Heart left ventricle (tissue), 16 donors: ENCODE measurements at regions of chr17 and their contacts with region 1.

Region 1: DNA sequence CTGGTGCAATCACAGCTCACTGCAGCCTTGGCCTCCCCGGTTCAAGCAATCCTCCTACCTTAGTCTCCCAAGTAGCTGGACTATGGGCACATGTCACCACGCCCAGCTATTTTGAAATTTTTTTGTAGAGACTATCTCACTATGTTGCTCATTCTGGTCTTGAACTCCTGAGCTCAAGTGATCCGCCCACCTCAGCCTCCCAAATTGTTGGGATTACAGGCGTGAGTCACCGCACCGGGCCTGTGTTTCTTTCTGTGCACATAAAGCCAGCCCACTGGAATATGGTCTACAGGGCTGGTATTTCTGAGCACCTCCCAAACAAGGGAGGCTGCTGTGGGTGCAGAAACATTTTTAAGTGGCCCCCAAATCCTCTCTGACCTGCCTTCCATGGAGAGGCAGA is 8.4 kb downstream of the TMEM95 start:
- DNase-seq: no peak
- ATAC-seq: no peak
- H3K4me3 ChIP-seq: no peak overlapping the region
- H3K27ac ChIP-seq: no peak overlapping the region
- H3K4me1 ChIP-seq: no peaks in the 10 kb centered on the region
- H3K27me3 ChIP-seq: no peaks in the 10 kb centered on the region
- CTCF ChIP-seq: no peak
- POLR2A ChIP-seq: no peak

Region 2: GRCh38 chr17:7156342-7156940 is 206.9 kb before region 1 on chr17:
- intact Hi-C with region 1: no loop called
- DNase-seq: no peak
- ATAC-seq: no peak
- H3K4me3 ChIP-seq: no peak overlapping the region
- H3K27ac ChIP-seq: no peak overlapping the region
- H3K4me1 ChIP-seq: no peaks in the 10 kb centered on the region
- H3K27me3 ChIP-seq: peaks cover 0 to 51% (median 8%) of the 10 kb centered on the region in 9 donors
- CTCF ChIP-seq: no peak
- POLR2A ChIP-seq: no peak

Region 3: DNA sequence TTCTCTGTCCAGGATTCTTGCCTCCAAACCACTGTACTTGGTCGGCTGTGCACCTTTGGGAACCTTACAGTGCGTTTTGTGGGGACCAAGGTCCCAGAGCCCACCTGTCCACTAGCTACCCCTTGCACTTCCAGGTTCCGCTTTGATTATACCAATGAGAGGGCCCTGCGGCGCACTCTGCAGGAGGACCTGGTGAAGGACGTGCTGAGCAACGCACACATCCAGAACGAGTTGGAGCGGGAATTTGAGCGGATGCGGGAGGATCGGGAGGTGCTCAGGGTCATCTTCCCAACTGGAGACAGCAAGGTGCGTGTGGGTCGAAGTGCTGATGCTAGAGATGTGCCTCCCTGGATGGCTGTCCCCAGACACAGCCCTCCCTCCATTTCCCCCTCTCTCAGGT is 139.7 kb after region 1 on chr17:
- intact Hi-C with region 1: loop called in 2 of 10 experiments (anchors 10 kb)
- DNase-seq: no peak
- ATAC-seq: peak in 1 of 4 donors; percentile 33
- H3K4me3 ChIP-seq: no peak overlapping the region
- H3K27ac ChIP-seq: no peak overlapping the region
- H3K4me1 ChIP-seq: peaks cover 0 to 4% (median 0%) of the 10 kb centered on the region in 12 donors
- H3K27me3 ChIP-seq: no peaks in the 10 kb centered on the region
- CTCF ChIP-seq: peak in 4 of 12 donors; percentile 10 to 31 (median 16)
- POLR2A ChIP-seq: no peak